MCF 10A (cell line): ENCODE measurements at regions of chr12 and their contacts with region 1.

Region 1: DNA sequence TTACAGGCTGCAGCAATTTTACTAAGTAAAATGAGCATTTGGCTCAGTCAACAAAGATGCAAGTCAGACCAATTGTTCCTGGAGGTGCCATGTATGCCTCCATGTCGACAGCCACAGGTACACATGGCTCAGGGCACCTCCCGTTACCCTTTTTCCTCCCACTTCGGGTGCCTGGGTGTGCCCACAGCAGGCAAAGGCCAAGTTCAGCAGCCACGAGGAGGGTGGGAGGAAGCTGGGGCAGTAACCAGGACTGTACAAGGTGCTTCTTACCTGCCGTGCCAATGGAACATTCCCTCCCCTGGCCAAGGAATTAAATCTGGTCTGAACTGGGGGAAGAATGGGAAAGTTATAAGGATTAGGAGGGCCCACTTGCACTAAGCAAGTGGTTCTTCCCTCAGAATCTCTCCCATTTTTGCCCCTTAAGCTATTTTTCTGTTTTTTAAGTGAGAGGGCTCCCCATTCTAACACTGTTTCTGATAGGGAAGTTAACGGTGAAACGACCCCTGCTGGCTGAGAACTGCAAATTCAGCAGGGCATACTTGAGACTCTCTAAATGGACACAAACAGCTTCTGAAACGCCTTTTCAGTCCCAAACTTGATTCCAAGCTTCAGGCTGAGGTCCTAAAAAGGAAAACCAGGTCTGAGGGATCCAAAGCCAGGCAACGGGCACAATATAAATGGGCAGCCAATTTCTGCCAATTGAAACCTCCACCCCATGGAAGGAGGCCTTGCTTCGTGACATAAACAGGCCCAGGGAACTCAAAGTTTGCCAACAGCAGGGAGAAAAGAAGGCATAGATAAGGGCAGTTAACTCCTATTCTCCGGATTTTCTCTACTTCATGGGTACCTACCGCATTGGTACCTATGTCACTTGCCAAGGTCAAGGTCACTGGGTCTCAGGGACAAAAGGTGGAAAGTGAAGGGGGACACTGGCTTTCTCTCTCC is 24.8 kb downstream of the CLECL1 start:
- DNase-seq: peak; percentile 67
- H3K4me3 Mint-ChIP-seq: no peak overlapping the region
- H3K27ac Mint-ChIP-seq: no peak overlapping the region
- H3K4me1 Mint-ChIP-seq: peaks cover 15% of the 10 kb centered on the region
- H3K27me3 Mint-ChIP-seq: no peaks in the 10 kb centered on the region
- CTCF ChIP-seq: peak; percentile 83

Region 2: DNA sequence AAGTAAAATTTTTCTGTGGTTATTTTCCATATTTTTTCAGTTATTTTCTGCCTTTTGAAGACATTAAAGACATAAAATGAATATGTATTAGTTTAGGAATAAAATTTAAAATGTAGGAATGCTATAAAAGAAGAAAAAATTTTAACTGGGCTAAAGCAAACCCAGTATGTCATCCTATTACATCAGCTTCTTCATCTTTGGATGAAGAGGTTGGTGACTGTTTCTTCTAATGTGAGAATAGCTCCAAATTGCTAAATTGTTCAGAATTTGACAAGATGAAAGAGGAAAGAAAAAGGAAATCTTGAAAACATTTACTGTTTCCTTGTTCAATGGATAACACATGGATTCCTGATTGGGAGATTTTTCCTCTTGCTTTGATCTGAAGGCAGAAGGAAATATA is 447.2 kb before region 1 on chr12:
- CTCF ChIA-PET with region 1: no interaction called
- POLR2A ChIA-PET with region 1: no interaction called
- intact Hi-C with region 1: no loop called
- DNase-seq: no peak
- H3K4me3 Mint-ChIP-seq: no peak overlapping the region
- H3K27ac Mint-ChIP-seq: no peak overlapping the region
- H3K4me1 Mint-ChIP-seq: no peaks in the 10 kb centered on the region
- H3K27me3 Mint-ChIP-seq: no peaks in the 10 kb centered on the region
- CTCF ChIP-seq: no peak

Region 3: GRCh38 chr12:9378430-9378835 is 329.7 kb before region 1 on chr12:
- CTCF ChIA-PET with region 1: interaction called, 12 read pairs
- POLR2A ChIA-PET with region 1: no interaction called
- intact Hi-C with region 1: no loop called
- DNase-seq: peak; percentile 45
- H3K4me3 Mint-ChIP-seq: no peak overlapping the region
- H3K27ac Mint-ChIP-seq: no peak overlapping the region
- H3K4me1 Mint-ChIP-seq: no peaks in the 10 kb centered on the region
- H3K27me3 Mint-ChIP-seq: no peaks in the 10 kb centered on the region
- CTCF ChIP-seq: peak; percentile 44

Region 4: DNA sequence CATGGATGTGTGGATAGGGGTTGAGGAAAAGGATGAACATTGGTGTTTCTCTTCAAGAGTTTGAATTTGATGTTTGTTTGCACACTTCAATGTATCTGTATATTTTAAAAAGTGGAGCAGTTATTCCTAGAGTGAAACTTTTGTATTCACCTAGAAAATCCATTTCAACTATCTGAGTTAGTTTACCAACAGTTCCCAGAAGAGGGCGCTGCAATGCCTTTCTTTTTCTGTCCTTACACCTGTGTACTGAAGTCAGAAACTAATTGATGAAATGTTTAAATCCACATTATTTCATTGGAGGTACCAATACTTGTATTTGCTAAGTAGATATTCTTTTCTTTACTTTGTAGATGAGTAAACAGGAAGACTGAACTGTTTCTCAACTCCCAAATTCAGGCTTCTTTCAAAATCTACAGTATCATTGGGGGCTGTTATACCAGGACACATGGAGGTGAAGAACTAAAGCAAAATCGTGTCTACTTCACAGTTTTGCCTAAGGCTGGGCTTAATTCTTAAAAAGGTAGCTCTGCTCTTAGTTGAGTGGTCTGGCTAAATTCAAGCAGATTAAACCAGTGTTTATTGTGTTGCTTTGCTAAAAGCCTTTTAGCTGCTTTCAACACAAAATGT is 73.8 kb before region 1 on chr12:
- CTCF ChIA-PET with region 1: interaction called, 108 read pairs
- POLR2A ChIA-PET with region 1: no interaction called
- intact Hi-C with region 1: loop called (anchors 1 kb)
- DNase-seq: peak; percentile 79
- H3K4me3 Mint-ChIP-seq: no peak overlapping the region
- H3K27ac Mint-ChIP-seq: no peak overlapping the region
- H3K4me1 Mint-ChIP-seq: no peaks in the 10 kb centered on the region
- H3K27me3 Mint-ChIP-seq: no peaks in the 10 kb centered on the region
- CTCF ChIP-seq: peak; percentile 73

Region 5: DNA sequence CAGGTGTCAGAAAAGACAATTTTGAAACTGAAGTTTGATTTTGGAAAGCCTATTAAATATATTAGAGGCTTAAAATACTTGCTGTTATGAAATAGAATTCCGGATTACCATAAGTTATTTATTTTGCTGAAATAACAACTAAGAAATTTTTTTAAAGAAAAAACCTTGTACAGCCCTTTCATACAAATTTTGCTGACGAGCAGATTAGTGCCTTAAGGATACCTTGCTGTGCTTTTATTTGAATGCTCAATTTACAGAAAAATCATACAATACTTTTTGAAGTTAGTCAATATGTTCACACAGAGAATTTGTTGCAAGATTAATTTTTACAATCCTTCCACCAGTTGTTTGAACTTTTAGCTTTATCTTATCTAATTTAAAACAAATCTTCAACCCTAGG is 68.1 kb before region 1 on chr12:
- CTCF ChIA-PET with region 1: interaction called, 108 read pairs
- POLR2A ChIA-PET with region 1: no interaction called
- intact Hi-C with region 1: no loop called
- DNase-seq: no peak
- H3K4me3 Mint-ChIP-seq: no peak overlapping the region
- H3K27ac Mint-ChIP-seq: no peak overlapping the region
- H3K4me1 Mint-ChIP-seq: no peaks in the 10 kb centered on the region
- H3K27me3 Mint-ChIP-seq: no peaks in the 10 kb centered on the region
- CTCF ChIP-seq: no peak

Region 6: GRCh38 chr12:9721394-9722092 is 13.4 kb after region 1 on chr12:
- CTCF ChIA-PET with region 1: interaction called, 32 read pairs
- POLR2A ChIA-PET with region 1: interaction called, 5 read pairs
- intact Hi-C with region 1: no loop called
- DNase-seq: peak; percentile 42
- H3K4me3 Mint-ChIP-seq: no peak overlapping the region
- H3K27ac Mint-ChIP-seq: peak overlapping the region; percentile 10
- H3K4me1 Mint-ChIP-seq: peaks cover 15% of the 10 kb centered on the region
- H3K27me3 Mint-ChIP-seq: no peaks in the 10 kb centered on the region
- CTCF ChIP-seq: no peak

Region 7: GRCh38 chr12:9760699-9761418 is 52.7 kb after region 1 on chr12 and contains the start of gene CD69:
- CTCF ChIA-PET with region 1: no interaction called
- POLR2A ChIA-PET with region 1: no interaction called
- intact Hi-C with region 1: no loop called
- DNase-seq: no peak
- H3K4me3 Mint-ChIP-seq: no peak within 1 kb of the TSS
- H3K27ac Mint-ChIP-seq: no peak within 1 kb of the TSS
- H3K4me1 Mint-ChIP-seq: no peaks in the 10 kb centered on the region
- H3K27me3 Mint-ChIP-seq: peaks cover 57% of the 10 kb centered on the region
- CTCF ChIP-seq: no peak
- total RNA-seq, gene CD69: not detected in 2 replicates

Region 8: GRCh38 chr12:9797722-9798619 is 89.8 kb after region 1 on chr12:
- CTCF ChIA-PET with region 1: no interaction called
- POLR2A ChIA-PET with region 1: no interaction called
- intact Hi-C with region 1: no loop called
- DNase-seq: peak; percentile 74
- H3K4me3 Mint-ChIP-seq: no peak overlapping the region
- H3K27ac Mint-ChIP-seq: no peak overlapping the region
- H3K4me1 Mint-ChIP-seq: no peaks in the 10 kb centered on the region
- H3K27me3 Mint-ChIP-seq: no peaks in the 10 kb centered on the region
- CTCF ChIP-seq: peak; percentile 47